ENCODE measurements at regions of chr9 and their contacts with region 1.

Region 1: GRCh38 chr9:125558453-125559092 is 148.4 kb downstream of the MAPKAP1 start:
- DNase-seq: peak; percentile 69
- H3K4me3 Mint-ChIP-seq: no peak overlapping the region
- H3K27ac Mint-ChIP-seq: no peak overlapping the region
- H3K4me1 Mint-ChIP-seq: peaks cover 15% of the 10 kb centered on the region
- H3K27me3 Mint-ChIP-seq: no peaks in the 10 kb centered on the region

Region 2: DNA sequence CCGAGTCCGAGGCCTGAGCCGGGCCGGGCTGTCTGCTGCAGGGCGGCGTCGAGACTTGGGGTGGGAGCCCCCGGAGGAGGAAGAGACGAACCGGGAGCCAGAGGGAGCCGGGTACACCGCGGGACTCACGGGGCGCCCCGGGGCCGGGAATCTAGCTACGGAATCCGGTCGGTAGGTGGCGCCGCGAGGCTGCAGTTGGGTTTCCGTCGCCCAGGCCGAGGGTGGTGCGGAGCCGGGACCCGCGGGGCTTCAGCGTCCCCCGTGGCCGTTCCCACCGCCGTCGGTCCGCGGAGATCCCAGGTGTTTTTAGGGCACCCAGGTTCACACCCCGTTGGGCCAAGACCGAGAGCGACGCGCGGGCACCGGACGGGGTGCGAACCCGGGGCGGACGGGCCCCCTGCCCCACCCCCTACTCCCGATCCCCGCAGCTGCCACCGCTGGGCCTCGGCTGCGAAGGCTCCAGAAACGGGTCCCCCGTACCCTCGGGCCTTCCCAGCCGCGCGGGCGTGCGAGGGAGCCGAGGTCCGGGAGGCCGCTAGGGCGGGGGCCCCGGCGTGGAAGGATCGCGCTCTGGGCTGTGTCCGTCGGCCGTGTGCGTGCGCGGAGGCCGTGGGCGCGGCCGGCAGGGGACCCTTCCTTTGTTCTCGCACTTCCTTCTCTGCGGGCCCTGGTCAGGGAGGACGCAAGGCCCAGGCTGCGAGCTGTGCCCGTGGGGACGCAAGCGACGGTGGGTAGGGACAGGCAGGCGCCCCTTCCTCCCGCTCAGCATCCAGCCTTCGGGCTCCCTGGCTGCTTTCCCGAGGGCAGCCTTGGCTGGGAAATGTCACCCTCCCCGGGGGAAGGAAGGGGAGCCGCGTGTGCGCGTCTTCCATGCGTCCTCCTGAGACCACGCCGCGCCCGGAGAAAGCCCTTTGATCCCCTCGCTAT is 150.3 kb before region 1 on chr9:
- CTCF ChIA-PET with region 1: interaction called, 14 read pairs
- DNase-seq: peak; percentile 82
- H3K4me3 Mint-ChIP-seq: peak overlapping the region; percentile 61
- H3K27ac Mint-ChIP-seq: no peak overlapping the region
- H3K4me1 Mint-ChIP-seq: peaks cover 15% of the 10 kb centered on the region
- H3K27me3 Mint-ChIP-seq: peaks cover 58% of the 10 kb centered on the region

Region 3: DNA sequence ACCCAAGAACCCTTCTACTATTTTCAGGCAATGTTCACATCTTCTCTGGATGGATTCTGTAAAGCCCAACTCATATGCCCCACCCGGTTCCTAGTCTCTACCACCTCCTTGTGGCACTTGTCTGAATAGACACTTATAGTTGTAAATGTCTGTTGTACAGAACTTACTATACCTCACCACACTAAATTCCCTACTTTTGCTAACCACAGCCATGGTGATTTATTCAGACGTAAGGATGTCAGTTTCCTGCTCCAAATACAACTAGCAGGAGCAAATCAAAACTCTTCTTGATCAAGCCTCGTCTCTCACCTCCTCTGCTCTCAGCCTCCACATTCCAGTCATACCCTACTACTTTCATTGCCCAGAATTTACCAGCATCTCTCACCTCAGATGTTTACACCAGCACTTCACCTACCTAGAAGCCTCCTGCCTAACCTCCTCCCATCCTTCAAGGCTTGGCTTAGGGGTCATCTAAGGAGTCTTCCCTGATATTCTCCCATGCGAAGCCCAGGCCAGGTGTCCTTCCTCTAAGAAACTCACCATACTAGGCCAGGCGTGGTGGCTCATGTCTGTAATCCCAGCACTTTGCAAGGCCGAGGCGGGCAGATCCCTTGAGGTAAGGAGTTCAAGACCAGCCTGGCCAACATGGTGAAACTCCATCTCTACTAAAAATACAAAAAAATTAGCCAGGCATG is 73.0 kb after region 1 on chr9:
- CTCF ChIA-PET with region 1: interaction called, 12 read pairs
- DNase-seq: peak; percentile 38
- H3K4me3 Mint-ChIP-seq: no peak overlapping the region
- H3K27ac Mint-ChIP-seq: peak overlapping the region; percentile 28
- H3K4me1 Mint-ChIP-seq: peaks cover 45% of the 10 kb centered on the region
- H3K27me3 Mint-ChIP-seq: no peaks in the 10 kb centered on the region